HCT116 (cell line): ENCODE measurements at regions of chr3 and their contacts with region 1.

Region 1: DNA sequence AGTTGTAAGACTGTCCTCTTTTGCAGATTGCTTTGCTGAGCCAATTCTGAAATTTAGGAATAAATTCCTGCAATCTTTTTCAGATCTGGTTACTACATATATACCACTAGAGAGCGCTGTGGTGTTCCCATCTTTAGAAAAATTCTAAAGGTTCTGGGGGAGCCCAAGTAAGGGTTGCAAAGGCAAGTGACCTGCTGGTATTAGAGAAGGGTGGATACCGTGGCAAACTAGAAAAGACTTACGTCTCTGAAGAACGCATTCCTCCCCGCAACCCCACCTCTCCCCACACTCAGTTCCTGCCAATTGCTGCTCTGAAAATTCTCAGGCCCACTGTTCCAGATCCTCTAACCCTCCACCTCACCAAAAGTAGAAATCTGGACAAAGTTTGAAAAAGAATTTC is 48.5 kb downstream of the EFHB start:
- DNase-seq: no peak
- ATAC-seq: peak; percentile 72
- H3K4me3 ChIP-seq: no peak overlapping the region
- H3K27ac ChIP-seq: no peak overlapping the region
- H3K4me1 ChIP-seq: peaks cover 0 to 14% of the 10 kb centered on the region in 2 experiments; a peak in 2 of 4 replicates
- H3K27me3 ChIP-seq: no peaks in the 10 kb centered on the region
- CTCF ChIP-seq: peak; percentile 35 to 75 (median 56); a peak in 5 of 6 replicates
- POLR2A ChIP-seq: no peak
- RAD21 ChIP-seq: peak; percentile 68

Region 2: GRCh38 chr3:20039766-20040475 is 154.5 kb after region 1 on chr3 and contains the start of gene KAT2B:
- CTCF ChIA-PET with region 1: no interaction called
- POLR2A ChIA-PET with region 1: no interaction called
- RAD21 ChIA-PET with region 1: no interaction called
- intact Hi-C with region 1: loop called (anchors 5 kb)
- DNase-seq: no peak
- ATAC-seq: peak; percentile 76
- H3K4me3 ChIP-seq: peak within 1 kb of the TSS; percentile 54 to 66
- H3K27ac ChIP-seq: peak within 1 kb of the TSS; percentile 53; the same call in 1 of the 2 replicates
- H3K4me1 ChIP-seq: peaks cover 8 to 20% of the 10 kb centered on the region in 2 experiments; a peak in 3 of 4 replicates
- H3K27me3 ChIP-seq: no peaks in the 10 kb centered on the region
- CTCF ChIP-seq: peak in 2 of 3 experiments; percentile 50 to 56; a peak in 4 of 6 replicates
- POLR2A ChIP-seq: no peak
- RAD21 ChIP-seq: no peak
- total RNA-seq, gene KAT2B: 3.7 TPM

Region 3: GRCh38 chr3:20154931-20155330 is 269.5 kb after region 1 on chr3:
- CTCF ChIA-PET with region 1: no interaction called
- POLR2A ChIA-PET with region 1: no interaction called
- RAD21 ChIA-PET with region 1: no interaction called
- intact Hi-C with region 1: loop called (anchors 10 kb)
- DNase-seq: no peak
- ATAC-seq: no peak
- H3K4me3 ChIP-seq: no peak overlapping the region
- H3K27ac ChIP-seq: no peak overlapping the region
- H3K4me1 ChIP-seq: no peaks in the 10 kb centered on the region
- H3K27me3 ChIP-seq: no peaks in the 10 kb centered on the region
- CTCF ChIP-seq: no peak
- POLR2A ChIP-seq: no peak
- RAD21 ChIP-seq: peak; percentile 33; the same call in 1 of the 2 replicates

Region 4: DNA sequence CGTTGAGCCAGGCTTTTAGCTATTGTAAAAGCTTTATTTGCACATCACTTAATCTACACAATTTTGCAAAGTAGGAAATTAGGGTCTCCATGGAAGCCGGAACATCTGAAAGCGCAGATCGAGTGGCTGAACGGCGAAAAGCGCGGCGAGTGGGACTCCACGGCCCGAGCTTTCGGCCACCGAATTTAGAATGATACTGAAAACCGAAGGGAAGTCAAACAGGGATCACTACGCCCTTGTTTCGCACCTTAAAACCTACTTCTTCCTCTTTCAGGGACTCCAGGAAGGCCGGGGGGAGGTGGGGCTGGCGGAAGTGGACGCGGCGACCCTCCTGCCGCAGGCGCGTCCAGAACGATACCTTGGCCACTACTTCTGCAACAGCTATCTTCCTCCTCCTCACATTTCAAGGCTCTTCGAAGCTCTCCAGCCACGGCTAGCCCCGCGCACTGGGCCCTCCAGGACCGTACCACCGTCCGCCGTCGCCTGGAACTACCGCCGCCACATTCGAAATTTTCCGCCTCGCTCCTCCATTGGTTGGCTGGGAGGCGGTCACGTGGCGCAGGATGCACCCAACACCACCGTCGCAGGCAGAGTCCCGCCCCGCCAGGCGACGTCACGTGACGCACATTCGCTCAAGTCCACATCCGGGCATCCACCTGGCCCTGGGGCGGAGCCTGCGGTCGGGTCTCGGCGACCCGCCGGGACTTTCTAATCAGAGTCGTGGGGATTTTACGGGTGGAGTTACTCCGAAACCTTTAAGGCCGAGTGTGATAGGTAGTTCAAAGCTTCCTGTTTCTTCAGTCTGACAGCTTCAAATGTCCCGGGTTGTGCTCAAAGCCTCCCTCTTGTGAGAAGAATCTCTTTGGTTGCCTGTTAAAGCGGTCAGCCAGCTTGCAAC is 300.5 kb after region 1 on chr3 and contains the start of gene SGO1:
- CTCF ChIA-PET with region 1: no interaction called
- POLR2A ChIA-PET with region 1: no interaction called
- RAD21 ChIA-PET with region 1: interaction called in 1 of 2 experiments, 3 read pairs
- intact Hi-C with region 1: loop called (anchors 10 kb)
- DNase-seq: peak; percentile 95
- ATAC-seq: peak; percentile 94
- H3K4me3 ChIP-seq: peak within 1 kb of the TSS; percentile 77 to 88
- H3K27ac ChIP-seq: peak within 1 kb of the TSS; percentile 49
- H3K4me1 ChIP-seq: peaks cover 7 to 16% of the 10 kb centered on the region in 2 experiments; a peak in 3 of 4 replicates
- H3K27me3 ChIP-seq: no peaks in the 10 kb centered on the region
- CTCF ChIP-seq: no peak
- POLR2A ChIP-seq: peak; percentile 74
- RAD21 ChIP-seq: no peak; the same call in 1 of the 2 replicates
- total RNA-seq, gene SGO1: 23.5 TPM